ENCODE measurements at regions of chr2 and their contacts with region 1.

Region 1: GRCh38 chr2:127857265-127857808 is 618 bp downstream of the POLR2D start:
- DNase-seq: no peak

Region 2: GRCh38 chr2:127526149-127527000 is 331.0 kb before region 1 on chr2 and contains the start of gene IWS1:
- intact Hi-C with region 1: loop called (anchors 5 kb)
- DNase-seq: peak; percentile 97
- total RNA-seq, gene IWS1: 40.7 TPM

Region 3: DNA sequence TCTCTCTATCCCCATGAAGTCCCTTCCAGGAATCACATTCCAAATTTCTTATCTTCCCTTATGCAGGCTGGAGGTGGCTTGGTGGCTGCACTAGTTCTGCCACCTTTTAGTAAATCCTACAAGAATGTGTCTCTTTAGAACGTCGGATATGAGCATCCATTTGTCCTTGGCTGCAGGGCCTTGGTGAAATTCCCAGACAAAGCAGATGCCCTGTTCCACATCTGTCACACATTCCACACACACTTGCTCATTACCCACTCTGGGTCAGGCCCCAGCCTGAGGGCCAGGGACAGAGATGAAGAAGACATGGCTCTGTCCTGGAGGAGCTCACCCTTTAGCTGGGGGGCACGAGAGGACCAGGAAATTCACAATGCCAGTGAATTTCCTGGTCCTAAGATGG is 242.6 kb before region 1 on chr2:
- intact Hi-C with region 1: no loop called
- DNase-seq: peak; percentile 72

Region 4: DNA sequence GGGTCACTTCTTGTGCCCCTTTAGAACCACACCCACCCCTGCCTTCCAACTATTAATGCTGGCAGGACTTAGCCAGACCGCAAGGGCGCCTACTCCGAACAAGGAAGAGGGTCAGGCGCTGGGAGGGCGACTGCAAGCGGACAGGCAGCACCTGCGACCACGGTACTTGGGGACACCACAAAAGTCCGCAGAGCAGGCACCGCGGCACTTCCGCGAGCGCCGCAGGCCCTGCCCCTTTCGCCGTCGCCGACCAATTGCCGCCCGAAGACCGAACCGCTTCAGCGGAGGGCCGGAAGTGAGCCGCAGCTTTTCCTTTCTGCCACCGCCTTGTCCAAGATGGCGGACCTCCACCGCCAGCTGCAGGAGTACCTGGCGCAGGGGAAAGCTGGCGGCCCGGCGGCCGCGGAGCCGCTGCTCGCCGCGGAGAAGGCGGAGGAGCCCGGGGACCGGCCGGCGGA is 156.1 kb before region 1 on chr2 and contains the start of gene SFT2D3:
- intact Hi-C with region 1: loop called (anchors 5 kb)
- DNase-seq: peak; percentile 98
- total RNA-seq, gene SFT2D3: 3.1 TPM

Region 5: GRCh38 chr2:127721311-127721977 is 135.9 kb before region 1 on chr2:
- intact Hi-C with region 1: no loop called
- DNase-seq: no peak

Region 6: DNA sequence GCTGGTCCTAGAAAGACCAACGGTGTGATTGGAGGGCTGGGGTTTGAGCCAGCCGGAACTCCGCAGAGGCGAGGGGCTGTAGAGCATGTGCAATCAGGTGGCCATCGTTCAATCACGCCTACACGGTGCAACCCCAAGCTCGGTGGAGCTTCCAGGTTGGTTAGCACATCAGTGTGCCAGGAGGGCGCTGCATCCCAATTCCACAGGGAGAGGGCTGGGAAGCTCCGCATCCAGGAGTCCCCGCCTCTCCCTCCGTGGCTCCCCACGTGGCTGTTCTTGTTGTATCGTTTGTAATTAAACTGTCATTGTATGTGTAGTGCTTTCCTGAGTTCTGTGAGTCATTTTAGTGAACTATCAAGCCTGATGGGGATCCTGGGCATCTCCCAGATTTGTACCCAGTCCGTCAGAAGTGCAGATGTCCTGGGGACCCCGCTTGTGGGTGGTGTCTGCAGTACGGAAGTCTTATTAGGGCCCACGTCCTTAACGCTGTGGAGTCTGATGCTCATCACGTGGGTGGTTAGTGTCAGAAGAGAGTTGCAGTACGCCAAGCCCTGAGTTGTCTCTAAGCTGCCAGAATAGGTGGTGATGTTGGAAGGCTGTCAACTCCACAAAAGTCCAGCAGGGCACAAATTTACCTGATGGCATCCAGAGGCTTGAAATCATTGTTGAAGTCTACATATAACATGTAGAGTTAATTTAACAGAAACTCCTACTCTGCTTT is 49.0 kb after region 1 on chr2:
- intact Hi-C with region 1: no loop called
- DNase-seq: no peak

Region 7: DNA sequence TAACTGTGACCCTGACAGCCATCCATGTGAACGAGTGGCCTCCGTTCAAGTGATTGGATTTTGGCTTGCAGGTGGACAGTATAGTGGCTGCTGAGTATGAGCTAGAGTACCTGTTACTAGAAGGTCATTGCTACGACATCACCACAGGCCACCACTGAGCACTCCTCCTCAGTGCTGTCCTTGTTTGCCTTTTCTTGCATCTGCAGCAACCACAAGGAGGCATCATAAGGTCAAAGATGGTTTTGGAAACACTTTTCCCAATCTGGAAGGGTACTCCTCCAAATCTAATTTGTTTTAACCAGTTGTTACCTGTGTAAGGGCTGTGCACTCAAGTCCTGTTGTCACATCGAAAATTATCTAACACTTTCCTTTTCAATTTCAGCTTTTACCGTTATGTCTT is 314.9 kb after region 1 on chr2:
- intact Hi-C with region 1: no loop called
- DNase-seq: no peak

Measured in cardiac septum (tissue), 1 donor.